Activated naive CD4-positive, alpha-beta T cell treated with anti-CD3 and anti-CD28 coated beads for 36 hours (primary cell): ENCODE measurements at regions of chr19 and their contacts with region 1.

Region 1: DNA sequence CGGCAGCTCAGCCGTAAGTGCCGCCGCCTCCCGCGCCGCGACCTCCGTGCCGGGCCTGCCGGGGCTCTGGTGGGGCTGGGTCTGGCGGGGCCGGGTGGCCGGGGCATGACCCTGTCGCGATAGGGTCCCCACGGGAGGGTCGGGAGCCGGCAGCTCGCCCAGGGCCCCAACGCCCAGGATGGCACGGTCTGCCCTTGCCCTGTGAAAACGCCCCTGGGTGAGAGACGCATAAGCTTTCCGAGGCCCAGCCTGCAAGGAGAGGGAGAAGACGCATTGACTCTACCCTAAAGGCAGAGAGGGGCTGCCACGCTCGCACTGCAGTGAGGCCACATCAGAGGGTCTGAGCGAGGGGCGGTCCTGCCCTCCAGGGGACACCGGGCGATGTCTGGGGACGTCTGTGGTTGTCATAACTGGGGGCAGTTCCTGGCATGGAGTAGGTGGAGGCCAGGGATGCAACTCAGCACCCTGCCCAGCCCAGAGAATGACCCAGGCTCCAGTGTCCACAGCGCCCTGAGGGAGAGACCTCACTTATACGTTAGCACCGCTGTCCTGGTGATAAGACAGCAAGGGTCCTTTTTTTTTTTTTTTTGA is 539 bp downstream of the ZNF554 start:
- DNase-seq: peak; percentile 27
- H3K4me3 Mint-ChIP-seq: peak overlapping the region; percentile 79
- H3K27ac Mint-ChIP-seq: no peak overlapping the region
- H3K4me1 Mint-ChIP-seq: peaks cover 10% of the 10 kb centered on the region
- H3K27me3 Mint-ChIP-seq: no peaks in the 10 kb centered on the region

Region 2: DNA sequence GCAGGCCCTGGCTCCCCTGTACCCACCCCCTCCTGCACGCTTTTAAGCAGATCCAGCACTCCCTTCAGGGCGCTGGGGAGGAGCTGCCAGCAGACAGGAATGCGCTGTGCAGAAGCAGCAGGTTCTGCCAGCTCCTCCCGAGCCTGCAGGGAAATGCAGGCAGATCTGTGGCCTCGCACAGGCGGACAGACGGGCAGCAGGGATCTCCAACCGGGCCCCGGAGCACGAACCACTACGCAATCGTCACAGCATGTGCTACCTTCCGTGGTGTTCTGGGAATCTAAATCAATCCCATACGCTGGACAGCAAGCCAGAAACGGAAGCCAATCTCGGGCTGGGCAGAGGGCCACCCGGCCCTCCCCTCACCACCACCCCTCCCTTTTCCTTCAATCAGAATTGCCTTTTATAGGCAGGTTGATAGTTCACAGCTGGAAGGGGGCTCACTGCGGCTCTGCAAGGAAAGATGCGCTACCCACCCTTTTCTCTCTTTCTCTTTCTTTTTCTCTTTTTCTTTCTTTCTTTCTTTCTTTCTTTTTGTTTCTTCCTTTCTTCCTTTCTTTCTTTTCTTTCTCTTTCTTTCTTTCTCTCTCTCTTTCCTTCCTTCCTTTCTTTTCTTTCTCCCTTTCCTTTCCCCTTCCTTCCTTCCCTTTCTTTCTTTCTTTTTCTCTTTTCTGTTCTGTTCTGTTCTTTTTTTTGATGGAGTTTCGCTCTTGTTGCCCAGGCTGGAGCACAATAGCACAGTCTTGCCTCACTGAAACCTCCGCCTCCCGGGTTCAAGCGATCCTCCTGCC is 217.6 kb before region 1 on chr19:
- CTCF ChIA-PET with region 1: no interaction called
- intact Hi-C with region 1: no loop called
- DNase-seq: no peak
- H3K4me3 Mint-ChIP-seq: no peak overlapping the region
- H3K27ac Mint-ChIP-seq: no peak overlapping the region
- H3K4me1 Mint-ChIP-seq: peaks cover 16% of the 10 kb centered on the region
- H3K27me3 Mint-ChIP-seq: peaks cover 3% of the 10 kb centered on the region

Region 3: DNA sequence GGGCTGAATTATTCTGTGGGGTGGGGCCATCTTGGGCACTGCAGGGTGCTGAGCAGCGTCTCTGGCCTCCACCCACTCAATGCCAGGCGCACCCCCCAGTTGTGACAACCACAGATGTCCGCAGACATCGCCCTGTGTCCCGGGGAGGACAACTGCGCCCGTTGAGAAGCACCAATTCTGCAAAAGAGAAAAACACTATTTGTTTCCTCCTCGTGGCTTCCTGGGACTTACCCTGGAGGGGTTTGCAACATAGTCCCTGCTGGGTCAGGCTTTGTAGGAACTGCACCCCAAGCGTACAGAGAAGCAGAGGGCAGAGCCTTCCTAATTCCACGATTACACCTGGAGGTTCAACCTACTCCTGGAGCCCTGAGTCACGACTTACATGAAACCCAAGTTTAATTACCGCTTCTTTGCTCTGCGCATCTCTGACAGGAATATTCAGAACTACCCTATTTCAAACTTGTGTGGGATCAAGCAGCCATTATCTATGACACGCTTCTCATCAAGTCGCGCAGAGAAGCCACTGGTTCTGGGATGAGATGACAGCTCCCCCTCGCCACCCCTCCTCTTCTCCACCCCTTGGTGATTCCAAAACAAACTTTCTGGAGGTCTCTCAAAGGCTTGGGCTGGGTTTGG is 69.3 kb before region 1 on chr19:
- CTCF ChIA-PET with region 1: no interaction called
- intact Hi-C with region 1: no loop called
- DNase-seq: no peak
- H3K4me3 Mint-ChIP-seq: no peak overlapping the region
- H3K27ac Mint-ChIP-seq: no peak overlapping the region
- H3K4me1 Mint-ChIP-seq: no peaks in the 10 kb centered on the region
- H3K27me3 Mint-ChIP-seq: no peaks in the 10 kb centered on the region

Region 4: DNA sequence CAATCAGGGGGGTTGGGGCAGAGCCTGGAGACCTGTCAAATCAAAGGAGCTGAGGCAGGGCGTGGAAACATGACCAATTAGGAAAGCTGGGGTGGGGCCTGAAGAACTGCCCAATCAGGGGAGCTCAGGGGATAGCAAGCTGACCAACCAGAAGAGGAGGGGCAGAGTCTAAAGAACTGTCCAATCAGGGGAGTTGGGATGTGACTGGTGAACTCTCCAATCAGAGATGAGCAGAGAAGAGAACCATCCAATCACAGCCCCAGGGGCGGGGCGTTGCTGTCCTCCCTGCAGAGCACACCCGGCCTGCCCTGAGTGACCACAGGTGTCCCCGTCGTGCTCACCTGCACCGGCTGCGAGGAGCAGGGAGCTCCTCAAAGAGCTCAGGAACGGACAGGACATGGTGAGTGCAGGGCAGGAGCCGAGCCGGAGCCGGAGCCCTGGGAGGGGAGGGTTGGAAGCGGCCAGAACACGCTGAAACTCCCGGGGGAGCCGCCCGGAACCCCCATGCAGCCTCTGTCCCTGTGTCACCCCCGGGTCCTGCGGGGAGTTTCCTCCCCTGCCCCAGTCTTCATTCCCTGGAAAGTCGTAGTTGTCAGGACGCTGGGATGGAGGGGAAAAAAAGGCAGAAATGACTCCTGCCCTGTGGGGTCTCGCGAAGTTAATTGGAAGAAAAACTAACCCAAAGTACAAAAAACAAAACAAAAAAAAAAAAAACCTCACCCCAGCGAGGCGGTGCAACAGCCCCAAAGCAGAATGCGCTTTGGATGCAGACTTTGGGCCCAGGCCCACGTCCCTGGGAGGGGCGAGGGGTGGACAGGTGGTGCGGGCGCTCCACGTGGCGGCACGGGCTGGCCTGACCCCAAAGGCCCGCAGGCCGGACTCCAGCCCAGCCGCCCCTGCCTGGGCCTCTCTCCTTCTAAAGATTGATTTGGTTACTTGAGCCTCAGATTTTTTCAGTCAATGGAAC is 47.1 kb after region 1 on chr19 and contains the start of gene ZNF556:
- CTCF ChIA-PET with region 1: interaction called, 3 read pairs
- intact Hi-C with region 1: loop called (anchors 1 kb)
- DNase-seq: no peak
- H3K4me3 Mint-ChIP-seq: no peak within 1 kb of the TSS
- H3K27ac Mint-ChIP-seq: no peak within 1 kb of the TSS
- H3K4me1 Mint-ChIP-seq: no peaks in the 10 kb centered on the region
- H3K27me3 Mint-ChIP-seq: no peaks in the 10 kb centered on the region
- total RNA-seq, gene ZNF556: not detected